GM12878 (cell line): ENCODE measurements at regions of chr22 and their contacts with region 1.

Region 1: DNA sequence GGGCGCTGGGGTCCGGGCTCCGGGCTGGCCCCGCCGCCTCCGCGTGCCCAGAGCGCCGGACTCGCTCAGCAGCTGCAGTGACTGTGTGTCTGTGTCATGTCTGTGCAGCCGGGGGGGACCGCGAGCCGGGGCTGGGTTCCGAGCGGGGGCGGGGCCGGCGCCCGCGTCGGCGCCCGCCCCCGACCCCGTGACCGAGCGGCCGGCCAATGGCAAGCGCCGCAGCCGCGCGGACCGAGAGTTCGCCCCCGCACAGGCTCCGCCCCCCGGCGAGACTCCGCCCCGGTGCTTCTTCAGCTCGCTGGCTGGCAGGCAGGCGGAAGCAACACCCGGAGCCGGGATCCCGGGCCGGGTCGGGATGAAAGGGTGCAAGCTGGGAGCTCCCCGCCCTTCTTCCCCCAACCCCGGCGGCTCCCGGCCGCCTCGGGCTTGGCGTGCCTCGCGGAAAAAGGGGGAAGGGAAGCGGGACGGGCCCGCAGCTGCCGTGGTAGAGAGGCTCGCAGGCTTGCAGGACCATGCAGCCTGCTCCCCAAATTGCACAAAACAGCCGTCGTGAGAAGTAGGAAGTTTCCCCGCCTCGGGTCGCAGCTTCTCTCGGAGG is 750 bp upstream of the LARGE1 start:
- DNase-seq: peak; percentile 43
- ATAC-seq: peak; percentile 82
- H3K4me3 ChIP-seq: peak overlapping the region; percentile 93
- H3K27ac ChIP-seq: no peak overlapping the region
- H3K4me1 ChIP-seq: peaks cover 3% of the 10 kb centered on the region; the same call in 1 of the 2 replicates
- H3K27me3 ChIP-seq: peaks cover 0 to 1% of the 10 kb centered on the region in 2 experiments; a peak in 2 of 4 replicates
- CTCF ChIP-seq: no peak
- EP300 ChIP-seq: no peak
- POLR2A ChIP-seq: peak; percentile 92
- RAD21 ChIP-seq: no peak

Region 2: GRCh38 chr22:32644252-32645100 is 1276.5 kb before region 1 on chr22:
- CTCF ChIA-PET with region 1: no interaction called
- POLR2A ChIA-PET with region 1: no interaction called
- RAD21 ChIA-PET with region 1: no interaction called
- SMC1A ChIA-PET with region 1: no interaction called
- in situ Hi-C with region 1: no loop called
- intact Hi-C with region 1: no loop called
- DNase-seq: no peak
- ATAC-seq: no peak
- H3K4me3 ChIP-seq: no peak overlapping the region
- H3K27ac ChIP-seq: no peak overlapping the region
- H3K4me1 ChIP-seq: peaks cover 6% of the 10 kb centered on the region
- H3K27me3 ChIP-seq: no peaks in the 10 kb centered on the region
- CTCF ChIP-seq: no peak
- EP300 ChIP-seq: no peak
- POLR2A ChIP-seq: no peak
- RAD21 ChIP-seq: no peak

Region 3: GRCh38 chr22:33565580-33565995 is 355.4 kb before region 1 on chr22:
- CTCF ChIA-PET with region 1: interaction called, 4 read pairs
- POLR2A ChIA-PET with region 1: no interaction called
- RAD21 ChIA-PET with region 1: interaction called, 13 read pairs
- SMC1A ChIA-PET with region 1: interaction called, 3 read pairs
- in situ Hi-C with region 1: loop called (anchors 10 kb)
- intact Hi-C with region 1: no loop called
- DNase-seq: no peak
- ATAC-seq: peak; percentile 30
- H3K4me3 ChIP-seq: no peak overlapping the region
- H3K27ac ChIP-seq: peak overlapping the region; percentile 64
- H3K4me1 ChIP-seq: peaks cover 46% of the 10 kb centered on the region
- H3K27me3 ChIP-seq: no peaks in the 10 kb centered on the region
- CTCF ChIP-seq: no peak
- EP300 ChIP-seq: no peak
- POLR2A ChIP-seq: no peak
- RAD21 ChIP-seq: no peak

Region 4: GRCh38 chr22:33796494-33796893 is 124.5 kb before region 1 on chr22:
- CTCF ChIA-PET with region 1: no interaction called
- POLR2A ChIA-PET with region 1: no interaction called
- RAD21 ChIA-PET with region 1: no interaction called
- SMC1A ChIA-PET with region 1: interaction called, 3 read pairs
- in situ Hi-C with region 1: no loop called
- intact Hi-C with region 1: loop called (anchors 10 kb)
- DNase-seq: no peak
- ATAC-seq: no peak
- H3K4me3 ChIP-seq: no peak overlapping the region
- H3K27ac ChIP-seq: no peak overlapping the region
- H3K4me1 ChIP-seq: peaks cover 10% of the 10 kb centered on the region
- H3K27me3 ChIP-seq: no peaks in the 10 kb centered on the region
- CTCF ChIP-seq: 0 out of 6 replicates have a peak, but pooled peaks of 1 of the 3 experiments have one; percentile 6
- EP300 ChIP-seq: no peak
- POLR2A ChIP-seq: no peak
- RAD21 ChIP-seq: 0 out of 2 replicates have a peak, but pooled peaks have one; percentile 16

Region 5: DNA sequence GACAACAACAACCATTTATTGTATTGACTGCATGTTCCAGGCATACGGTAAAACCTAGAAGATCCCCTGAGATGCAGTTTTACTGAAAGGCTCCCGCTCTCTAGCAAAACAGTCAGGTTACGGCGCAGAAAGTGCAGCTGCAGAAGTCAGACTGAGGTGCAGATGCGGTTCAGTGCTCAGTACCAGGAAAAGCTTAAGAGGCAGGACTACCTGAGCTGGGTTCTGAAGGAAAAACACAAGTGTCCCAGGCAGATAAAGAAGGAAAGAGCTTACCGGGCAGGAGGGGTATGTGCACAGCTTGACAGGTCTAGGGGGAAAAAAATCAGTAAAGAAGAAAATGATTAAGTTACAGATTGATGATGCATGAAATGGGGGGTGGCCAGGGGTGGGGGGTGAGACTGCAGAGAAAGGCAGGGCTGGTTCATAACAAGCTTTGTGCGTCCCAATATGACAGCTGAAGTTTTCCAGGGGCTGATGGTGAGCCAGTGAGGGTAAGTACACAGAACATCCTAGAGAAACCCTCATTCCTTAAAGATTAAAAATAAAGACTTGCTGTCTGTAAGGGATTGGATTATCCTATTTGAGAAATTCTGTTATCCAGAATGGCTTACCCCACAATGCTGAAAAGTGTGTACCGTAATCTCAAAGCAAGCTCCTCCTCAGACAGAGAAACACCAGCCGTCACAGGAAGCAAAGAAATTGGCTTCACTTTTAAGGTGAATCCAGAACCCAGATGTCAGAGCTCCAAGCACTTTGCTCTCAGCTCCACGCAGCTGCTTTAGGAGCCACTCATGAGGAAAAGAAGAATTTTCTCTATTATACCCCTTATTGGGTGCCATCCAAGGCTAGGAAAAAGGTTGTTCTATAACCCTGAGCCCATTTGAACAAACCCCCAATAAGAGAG is 12.6 kb before region 1 on chr22:
- CTCF ChIA-PET with region 1: interaction called, 3 read pairs
- POLR2A ChIA-PET with region 1: interaction called, 13 read pairs
- RAD21 ChIA-PET with region 1: no interaction called
- SMC1A ChIA-PET with region 1: interaction called, 8 read pairs
- in situ Hi-C with region 1: no loop called
- intact Hi-C with region 1: no loop called
- DNase-seq: no peak
- ATAC-seq: no peak
- H3K4me3 ChIP-seq: no peak overlapping the region
- H3K27ac ChIP-seq: no peak overlapping the region
- H3K4me1 ChIP-seq: no peaks in the 10 kb centered on the region
- H3K27me3 ChIP-seq: no peaks in the 10 kb centered on the region
- CTCF ChIP-seq: no peak
- EP300 ChIP-seq: no peak
- POLR2A ChIP-seq: no peak
- RAD21 ChIP-seq: no peak

Region 6: GRCh38 chr22:34111210-34111824 is 190.3 kb after region 1 on chr22:
- CTCF ChIA-PET with region 1: interaction called, 17 read pairs
- POLR2A ChIA-PET with region 1: no interaction called
- RAD21 ChIA-PET with region 1: interaction called, 5 read pairs
- SMC1A ChIA-PET with region 1: interaction called, 13 read pairs
- in situ Hi-C with region 1: no loop called
- intact Hi-C with region 1: loop called (anchors 2 kb)
- DNase-seq: no peak
- ATAC-seq: peak; percentile 75
- H3K4me3 ChIP-seq: no peak overlapping the region
- H3K27ac ChIP-seq: no peak overlapping the region
- H3K4me1 ChIP-seq: no peaks in the 10 kb centered on the region
- H3K27me3 ChIP-seq: no peaks in the 10 kb centered on the region
- CTCF ChIP-seq: peak; percentile 61 to 82 (median 79)
- EP300 ChIP-seq: no peak
- POLR2A ChIP-seq: no peak
- RAD21 ChIP-seq: peak; percentile 59

Region 7: DNA sequence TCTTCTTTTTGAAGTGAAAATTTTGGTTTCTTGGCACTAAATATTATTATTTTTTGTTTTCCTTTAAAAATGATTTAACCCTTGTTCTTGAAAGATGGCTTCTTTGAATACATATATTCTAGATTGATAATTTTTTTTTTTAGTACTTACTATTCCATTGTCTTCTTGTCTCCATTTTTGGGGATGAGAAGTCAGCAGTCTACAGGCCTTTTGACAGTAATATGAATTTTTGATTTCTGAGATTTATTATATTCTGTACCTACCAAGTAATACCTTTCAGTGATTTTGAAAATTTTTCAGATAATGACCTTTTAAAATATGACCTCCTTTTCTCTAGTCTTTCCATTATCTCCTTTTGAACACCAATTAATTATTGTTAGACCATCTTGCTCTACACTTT is 293.3 kb after region 1 on chr22:
- CTCF ChIA-PET with region 1: no interaction called
- POLR2A ChIA-PET with region 1: no interaction called
- RAD21 ChIA-PET with region 1: no interaction called
- SMC1A ChIA-PET with region 1: no interaction called
- in situ Hi-C with region 1: no loop called
- intact Hi-C with region 1: no loop called
- DNase-seq: no peak
- ATAC-seq: no peak
- H3K4me3 ChIP-seq: no peak overlapping the region
- H3K27ac ChIP-seq: no peak overlapping the region
- H3K4me1 ChIP-seq: no peaks in the 10 kb centered on the region
- H3K27me3 ChIP-seq: no peaks in the 10 kb centered on the region
- CTCF ChIP-seq: no peak
- EP300 ChIP-seq: no peak
- POLR2A ChIP-seq: no peak
- RAD21 ChIP-seq: no peak

Region 8: DNA sequence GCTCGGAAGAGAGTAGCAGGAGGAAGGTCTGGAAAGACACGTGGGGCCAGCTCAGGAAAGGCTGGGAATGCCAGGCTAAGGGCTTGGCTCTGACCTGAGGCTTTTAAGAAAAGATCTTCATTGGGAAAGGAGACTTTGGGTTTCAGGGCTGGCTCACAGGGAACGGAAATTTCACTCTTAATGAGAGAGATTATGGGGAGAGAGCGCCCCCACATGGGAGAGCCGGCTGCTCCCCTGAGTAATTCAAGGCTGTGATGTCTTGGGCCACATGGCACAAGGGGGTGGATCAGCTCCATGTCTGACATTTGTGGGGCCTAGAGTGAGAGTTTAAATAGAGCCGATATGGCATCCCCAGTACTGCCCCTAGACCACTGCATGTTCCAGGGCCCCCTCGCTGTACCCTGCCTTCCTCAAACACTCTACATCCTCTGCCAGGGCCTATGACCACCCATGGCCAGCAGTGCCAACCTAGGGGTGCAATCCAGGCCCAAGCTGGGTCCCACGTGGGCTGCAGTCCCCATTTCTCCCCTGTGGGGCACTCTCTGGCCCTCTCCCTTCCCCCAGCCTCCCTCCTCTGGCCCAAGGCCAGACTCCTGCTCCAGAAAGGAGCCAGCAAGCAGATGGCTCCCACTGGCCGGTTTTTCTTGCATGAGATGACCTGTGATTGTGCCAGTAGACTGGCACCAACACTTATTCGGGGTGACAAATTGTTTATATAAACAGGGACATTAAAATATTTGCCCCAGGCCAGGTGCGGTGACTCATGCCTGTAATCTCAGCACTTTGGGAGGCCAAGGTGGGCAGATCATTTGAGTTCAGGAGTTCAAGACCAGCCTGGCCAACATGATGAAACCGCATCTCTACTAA is 1220.1 kb after region 1 on chr22:
- CTCF ChIA-PET with region 1: no interaction called
- POLR2A ChIA-PET with region 1: no interaction called
- RAD21 ChIA-PET with region 1: no interaction called
- SMC1A ChIA-PET with region 1: no interaction called
- in situ Hi-C with region 1: loop called (anchors 10 kb)
- intact Hi-C with region 1: no loop called
- DNase-seq: no peak
- ATAC-seq: peak; percentile 89
- H3K4me3 ChIP-seq: no peak overlapping the region
- H3K27ac ChIP-seq: peak overlapping the region; percentile 46
- H3K4me1 ChIP-seq: peaks cover 17% of the 10 kb centered on the region
- H3K27me3 ChIP-seq: no peaks in the 10 kb centered on the region
- CTCF ChIP-seq: peak; percentile 61 to 75 (median 68)
- EP300 ChIP-seq: no peak
- POLR2A ChIP-seq: no peak
- RAD21 ChIP-seq: peak; percentile 86